ENCODE measurements at regions of chr12 and their contacts with region 1.

Region 1: GRCh38 chr12:46268590-46269558 is at the start of gene SLC38A1:
- DNase-seq: peak; percentile 96
- H3K4me3 Mint-ChIP-seq: no peak within 1 kb of the TSS
- H3K27ac Mint-ChIP-seq: no peak within 1 kb of the TSS
- H3K4me1 Mint-ChIP-seq: peaks cover 21% of the 10 kb centered on the region
- H3K27me3 Mint-ChIP-seq: no peaks in the 10 kb centered on the region
- total RNA-seq, gene SLC38A1: 180 and 181 TPM in 2 replicates

Region 2: GRCh38 chr12:46209914-46210872 is 58.7 kb before region 1 on chr12:
- intact Hi-C with region 1: loop called (anchors 1 kb)
- DNase-seq: peak; percentile 79
- H3K4me3 Mint-ChIP-seq: peak overlapping the region; percentile 65
- H3K27ac Mint-ChIP-seq: peak overlapping the region; percentile 94
- H3K4me1 Mint-ChIP-seq: peaks cover 69% of the 10 kb centered on the region
- H3K27me3 Mint-ChIP-seq: no peaks in the 10 kb centered on the region

Region 3: DNA sequence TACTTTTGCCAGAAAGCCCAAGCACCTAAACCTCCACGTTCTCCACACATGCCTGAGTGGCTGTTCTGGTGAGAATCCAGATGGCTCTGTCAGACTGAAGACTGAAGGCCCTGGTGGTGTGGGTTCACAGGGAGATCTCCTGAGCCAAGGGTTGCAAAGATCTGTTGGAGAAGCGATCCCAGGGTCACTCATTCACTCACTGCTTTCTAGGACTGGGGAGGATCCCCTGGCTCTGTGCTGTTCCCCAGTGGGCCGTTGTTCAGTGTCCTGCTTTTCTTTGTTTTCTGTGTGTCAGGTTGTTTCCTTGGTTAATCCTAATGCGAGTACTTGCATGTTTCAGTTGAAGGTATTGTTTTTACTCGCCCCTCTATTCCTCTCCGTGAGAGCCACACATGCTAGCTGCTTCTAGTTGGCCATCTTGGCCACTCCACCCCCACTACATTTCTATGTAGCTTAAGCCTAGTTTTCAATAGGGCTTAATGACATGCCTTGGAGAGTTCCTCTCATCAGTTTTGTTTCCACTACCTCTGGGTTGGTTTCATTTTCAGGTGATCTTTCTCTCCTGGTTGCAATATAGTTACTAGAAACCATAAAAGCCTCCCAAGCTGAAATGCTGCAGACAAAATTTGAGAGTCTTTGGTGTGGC is 248.2 kb after region 1 on chr12:
- intact Hi-C with region 1: loop called (anchors 2 kb)
- DNase-seq: peak; percentile 83
- H3K4me3 Mint-ChIP-seq: peak overlapping the region; percentile 80
- H3K27ac Mint-ChIP-seq: peak overlapping the region; percentile 95
- H3K4me1 Mint-ChIP-seq: peaks cover 71% of the 10 kb centered on the region
- H3K27me3 Mint-ChIP-seq: no peaks in the 10 kb centered on the region

Region 4: GRCh38 chr12:46661110-46661845 is 392.4 kb after region 1 on chr12:
- intact Hi-C with region 1: loop called (anchors 5 kb)
- DNase-seq: peak; percentile 76
- H3K4me3 Mint-ChIP-seq: no peak overlapping the region
- H3K27ac Mint-ChIP-seq: peak overlapping the region; percentile 45
- H3K4me1 Mint-ChIP-seq: peaks cover 35% of the 10 kb centered on the region
- H3K27me3 Mint-ChIP-seq: no peaks in the 10 kb centered on the region

Region 5: GRCh38 chr12:47758834-47759690 is 1490.2 kb after region 1 on chr12 and contains the start of gene RAPGEF3:
- intact Hi-C with region 1: loop called (anchors 5 kb)
- DNase-seq: peak; percentile 91
- H3K4me3 Mint-ChIP-seq: peak within 1 kb of the TSS; percentile 82
- H3K27ac Mint-ChIP-seq: peak within 1 kb of the TSS; percentile 60
- H3K4me1 Mint-ChIP-seq: peaks cover 59% of the 10 kb centered on the region
- H3K27me3 Mint-ChIP-seq: peaks cover 2% of the 10 kb centered on the region
- total RNA-seq, gene RAPGEF3: 3.6 and 4.5 TPM in 2 replicates

Measured in activated CD4-positive, alpha-beta T cell treated with anti-CD3 and anti-CD28 coated beads, Interleukin-2, amount 10 ng/mL, durations not matched to agents 24 days and 14 days (primary cell).